ENCODE measurements at regions of chr6 and their contacts with region 1.

Region 1: DNA sequence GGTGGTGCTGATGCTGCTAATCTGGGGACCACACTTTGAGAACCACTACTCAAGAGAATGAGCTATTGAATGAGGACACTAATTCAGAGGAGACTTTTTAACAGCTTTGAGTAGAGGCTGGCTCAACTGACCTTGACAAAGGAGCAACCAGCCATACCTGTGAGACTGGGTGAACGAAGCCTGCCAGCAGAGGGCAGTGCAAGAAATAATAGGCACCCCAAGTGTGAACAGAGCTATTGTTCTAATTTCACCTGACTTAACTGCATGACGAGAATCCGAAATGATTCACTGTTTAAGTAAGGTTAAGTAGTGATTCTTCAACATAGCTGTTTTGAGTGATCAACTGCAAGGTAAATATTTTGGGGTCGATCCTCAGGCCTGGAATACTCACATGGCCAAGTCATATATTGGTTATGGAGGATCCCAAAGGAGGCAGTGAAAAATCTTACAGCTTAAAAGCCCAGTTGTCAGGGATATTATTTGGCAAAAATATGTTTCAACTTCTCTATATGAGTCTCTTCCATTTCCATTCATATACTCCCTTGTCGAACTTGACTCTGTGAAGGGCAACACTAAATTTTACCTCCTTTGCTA is 550.5 kb upstream of the MARCKS start:
- DNase-seq: peak; percentile 73
- ATAC-seq: peak; percentile 76
- H3K4me3 Mint-ChIP-seq: no peak overlapping the region
- H3K27ac Mint-ChIP-seq: no peak overlapping the region
- H3K4me1 Mint-ChIP-seq: no peaks in the 10 kb centered on the region
- H3K27me3 Mint-ChIP-seq: no peaks in the 10 kb centered on the region

Region 2: DNA sequence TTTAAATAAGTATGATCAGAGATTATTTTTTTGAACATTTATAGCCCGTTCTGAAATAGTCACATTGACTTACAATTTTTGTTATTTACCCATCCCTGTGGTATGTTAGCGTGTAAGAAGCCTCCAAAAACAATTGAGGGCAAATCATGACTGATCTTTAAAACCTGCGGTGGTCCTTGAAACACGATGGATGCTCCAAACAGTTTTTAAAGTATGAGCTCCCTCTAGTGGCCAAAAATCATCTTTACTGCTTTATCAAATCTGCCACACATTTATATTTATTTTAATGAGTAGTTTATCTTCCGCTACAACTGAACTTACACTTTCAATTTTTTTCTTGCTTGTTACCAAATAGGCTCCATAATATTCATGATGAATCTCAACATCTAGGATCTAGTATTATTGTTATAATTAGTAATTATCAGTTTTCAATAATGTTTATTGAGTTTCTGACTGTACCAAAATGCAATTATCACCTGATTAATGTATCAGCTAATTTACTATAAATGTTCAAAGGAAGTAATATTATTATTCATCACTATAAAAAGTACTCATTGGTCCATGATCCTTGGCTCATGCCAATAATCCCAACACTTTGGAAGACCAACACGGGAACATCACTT is 602.7 kb after region 1 on chr6:
- CTCF ChIA-PET with region 1: interaction called, 3 read pairs
- POLR2A ChIA-PET with region 1: no interaction called
- intact Hi-C with region 1: loop called in 1 of 2 experiments (anchors 1 kb)
- DNase-seq: no peak
- ATAC-seq: no peak
- H3K4me3 Mint-ChIP-seq: no peak overlapping the region
- H3K27ac Mint-ChIP-seq: no peak overlapping the region
- H3K4me1 Mint-ChIP-seq: no peaks in the 10 kb centered on the region
- H3K27me3 Mint-ChIP-seq: peaks cover 5% of the 10 kb centered on the region

Measured in activated CD4-positive, alpha-beta T cell treated with anti-CD3 and anti-CD28 coated beads for 36 hours (primary cell).